IMR-90 (cell line): ENCODE measurements at regions of chr15 and their contacts with region 1.

Region 1: DNA sequence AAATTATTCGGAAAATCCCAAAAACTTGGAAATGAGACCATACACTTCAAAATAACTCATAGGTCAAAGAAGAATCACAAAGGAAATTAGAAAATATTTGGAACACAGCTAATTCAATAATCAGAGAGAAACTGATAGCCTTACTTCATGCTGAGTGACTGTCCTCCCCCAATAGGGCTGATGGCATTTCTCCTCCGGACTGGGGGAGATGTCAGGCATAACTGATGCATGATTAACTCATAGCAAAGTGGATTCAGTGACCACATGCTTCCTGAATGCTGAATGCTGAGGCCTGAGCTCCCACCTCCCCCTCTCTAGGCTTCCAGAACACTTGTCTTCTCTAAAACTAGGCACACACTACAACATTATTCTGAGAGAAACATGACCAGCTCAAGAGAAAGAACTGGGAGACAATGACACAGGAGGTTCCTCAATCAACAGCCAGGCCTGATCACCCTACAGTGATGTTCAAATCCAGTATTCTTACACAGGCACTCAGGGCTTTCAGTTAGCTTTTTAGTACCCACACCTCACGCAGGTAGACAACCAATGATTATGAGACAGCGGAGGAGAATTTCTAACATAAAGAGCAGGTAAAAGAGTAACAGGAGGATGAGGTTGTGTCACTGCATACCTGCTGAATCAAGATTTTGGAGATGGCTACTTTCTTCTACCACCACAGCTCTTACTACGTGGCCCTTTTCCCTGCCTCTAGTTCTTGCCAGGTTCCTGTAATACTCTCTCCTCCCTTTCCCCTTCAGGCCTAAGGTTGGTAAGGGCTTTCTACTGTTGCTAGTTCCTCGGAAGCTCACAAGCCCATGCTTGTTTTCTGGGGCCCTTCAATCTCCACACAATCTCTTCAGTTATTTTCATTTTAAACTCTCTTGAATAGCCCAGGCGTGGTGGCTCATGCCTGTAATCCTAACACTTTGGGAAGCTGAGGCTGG is 96.1 kb downstream of the FMN1 start:
- DNase-seq: peak; percentile 91
- ATAC-seq: peak; percentile 92
- H3K4me3 ChIP-seq: no peak overlapping the region
- H3K27ac ChIP-seq: peak overlapping the region; percentile 79
- H3K4me1 ChIP-seq: peaks cover 20% of the 10 kb centered on the region
- H3K27me3 ChIP-seq: no peaks in the 10 kb centered on the region
- CTCF ChIP-seq: no peak
- POLR2A ChIP-seq: no peak
- RAD21 ChIP-seq: no peak

Region 2: DNA sequence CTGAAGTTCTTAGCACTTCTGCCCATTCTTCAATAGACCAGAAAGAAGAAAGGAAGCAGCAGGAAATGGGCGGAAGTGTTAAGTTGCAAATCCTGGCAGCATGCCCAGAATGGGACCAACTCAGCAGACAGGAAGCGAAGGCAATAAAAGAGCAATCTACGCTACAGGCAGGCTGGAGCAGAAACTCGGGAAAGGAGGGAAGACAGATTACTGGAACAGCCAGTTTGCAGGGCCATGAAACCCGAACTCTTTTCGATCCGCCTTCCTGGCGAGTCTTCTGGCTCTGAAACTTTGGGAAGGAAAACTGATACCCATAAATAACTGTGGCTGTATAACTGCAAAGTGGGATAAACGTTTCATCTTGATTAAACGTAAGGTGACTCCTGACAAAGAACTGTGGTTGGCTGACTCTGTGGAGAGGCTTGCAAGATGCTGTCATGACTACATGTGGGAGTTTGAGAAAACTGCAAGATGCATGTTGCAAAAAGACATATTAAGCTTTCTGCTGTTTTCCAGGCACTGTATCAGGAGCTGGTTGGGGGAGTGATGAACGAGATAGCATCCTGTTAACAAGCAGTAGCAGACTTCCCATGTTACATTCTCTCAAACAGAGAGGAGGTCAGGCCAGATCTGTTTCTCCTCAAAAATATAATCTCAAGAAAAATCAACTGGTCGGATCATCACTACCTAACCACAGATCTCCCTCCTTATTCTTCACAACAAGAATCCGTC is 28.4 kb after region 1 on chr15:
- CTCF ChIA-PET with region 1: interaction called, 3 read pairs
- POLR2A ChIA-PET with region 1: interaction called, 11 read pairs
- dilution Hi-C with region 1: no loop called
- in situ Hi-C with region 1: loop called (anchors 5 kb)
- intact Hi-C with region 1: no loop called
- DNase-seq: peak; percentile 98
- ATAC-seq: peak; percentile 86
- H3K4me3 ChIP-seq: peak overlapping the region; percentile 17; the same call in 1 of the 2 replicates
- H3K27ac ChIP-seq: peak overlapping the region; percentile 35
- H3K4me1 ChIP-seq: peaks cover 6% of the 10 kb centered on the region
- H3K27me3 ChIP-seq: no peaks in the 10 kb centered on the region
- CTCF ChIP-seq: no peak
- POLR2A ChIP-seq: no peak
- RAD21 ChIP-seq: 0 out of 2 replicates have a peak, but pooled peaks have one; percentile 2